HCT116 (cell line): ENCODE measurements at regions of chr3 and their contacts with region 1.

Region 1: GRCh38 chr3:65342084-65342683 is 654.4 kb upstream of the ADAMTS9 start:
- DNase-seq: peak; percentile 42
- ATAC-seq: peak; percentile 100
- H3K4me3 ChIP-seq: no peak overlapping the region
- H3K27ac ChIP-seq: no peak overlapping the region
- H3K4me1 ChIP-seq: no peaks in the 10 kb centered on the region
- H3K27me3 ChIP-seq: 0 out of 2 replicates have a peak, but pooled peaks cover 6% of the 10 kb centered on the region
- CTCF ChIP-seq: peak; percentile 45 to 87 (median 84); a peak in 5 of 6 replicates
- POLR2A ChIP-seq: no peak
- RAD21 ChIP-seq: peak; percentile 65

Region 2: DNA sequence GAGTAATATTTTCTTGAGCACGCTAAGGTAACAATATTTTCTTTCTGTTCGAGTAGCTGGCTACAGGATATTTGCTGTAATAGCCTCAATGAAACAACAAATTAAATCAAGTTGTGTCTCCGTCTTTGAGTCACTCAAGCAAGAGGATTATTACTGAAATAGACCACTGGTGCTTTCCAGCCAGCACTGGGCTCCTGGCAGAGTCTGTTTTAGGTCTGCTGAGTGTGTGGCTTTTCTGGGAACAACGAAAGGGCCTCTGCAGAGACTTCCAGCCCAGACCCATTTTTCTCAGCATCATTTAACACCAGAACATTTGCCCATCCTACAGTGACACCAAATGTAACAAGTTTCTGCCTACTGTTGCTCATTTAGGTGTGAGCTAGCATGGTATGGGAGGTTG is 43.6 kb after region 1 on chr3:
- CTCF ChIA-PET with region 1: no interaction called
- POLR2A ChIA-PET with region 1: no interaction called
- RAD21 ChIA-PET with region 1: no interaction called
- intact Hi-C with region 1: no loop called
- DNase-seq: no peak
- ATAC-seq: no peak
- H3K4me3 ChIP-seq: no peak overlapping the region
- H3K27ac ChIP-seq: no peak overlapping the region
- H3K4me1 ChIP-seq: no peaks in the 10 kb centered on the region
- H3K27me3 ChIP-seq: no peaks in the 10 kb centered on the region
- CTCF ChIP-seq: no peak
- POLR2A ChIP-seq: no peak
- RAD21 ChIP-seq: no peak

Region 3: DNA sequence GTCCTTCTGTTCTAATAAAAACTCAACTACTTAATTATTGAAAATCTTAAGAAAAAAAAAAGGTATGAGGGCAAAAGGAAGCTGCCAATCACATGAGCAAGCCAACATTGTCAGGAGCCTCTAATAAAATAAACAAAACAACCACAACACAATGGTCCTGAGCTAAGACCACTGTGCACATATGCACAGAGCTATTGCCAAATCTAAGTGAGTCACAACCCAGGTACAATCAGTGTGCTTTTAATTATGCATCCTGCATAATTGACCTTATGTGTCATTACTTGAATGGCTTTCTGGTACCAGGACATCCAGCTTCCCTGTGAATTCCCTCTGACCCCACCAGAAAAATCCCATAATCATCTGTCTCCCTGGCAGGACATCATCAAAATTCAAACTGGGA is 56.8 kb after region 1 on chr3:
- CTCF ChIA-PET with region 1: no interaction called
- POLR2A ChIA-PET with region 1: no interaction called
- RAD21 ChIA-PET with region 1: no interaction called
- intact Hi-C with region 1: no loop called
- DNase-seq: no peak
- ATAC-seq: no peak
- H3K4me3 ChIP-seq: no peak overlapping the region
- H3K27ac ChIP-seq: no peak overlapping the region
- H3K4me1 ChIP-seq: no peaks in the 10 kb centered on the region
- H3K27me3 ChIP-seq: no peaks in the 10 kb centered on the region
- CTCF ChIP-seq: no peak
- POLR2A ChIP-seq: no peak
- RAD21 ChIP-seq: no peak

Region 4: GRCh38 chr3:65672871-65673815 is 331.0 kb after region 1 on chr3:
- CTCF ChIA-PET with region 1: no interaction called
- POLR2A ChIA-PET with region 1: no interaction called
- RAD21 ChIA-PET with region 1: no interaction called
- intact Hi-C with region 1: loop called (anchors 1 kb)
- DNase-seq: peak; percentile 43
- ATAC-seq: peak; percentile 77
- H3K4me3 ChIP-seq: no peak overlapping the region
- H3K27ac ChIP-seq: no peak overlapping the region
- H3K4me1 ChIP-seq: no peaks in the 10 kb centered on the region
- H3K27me3 ChIP-seq: peaks cover 3% of the 10 kb centered on the region; the same call in 1 of the 2 replicates
- CTCF ChIP-seq: peak; percentile 37 to 94 (median 79); a peak in 5 of 6 replicates
- POLR2A ChIP-seq: no peak
- RAD21 ChIP-seq: peak; percentile 56